Esophagus squamous epithelium (tissue), 5 donors: ENCODE measurements at regions of chr16 and their contacts with region 1.

Region 1: DNA sequence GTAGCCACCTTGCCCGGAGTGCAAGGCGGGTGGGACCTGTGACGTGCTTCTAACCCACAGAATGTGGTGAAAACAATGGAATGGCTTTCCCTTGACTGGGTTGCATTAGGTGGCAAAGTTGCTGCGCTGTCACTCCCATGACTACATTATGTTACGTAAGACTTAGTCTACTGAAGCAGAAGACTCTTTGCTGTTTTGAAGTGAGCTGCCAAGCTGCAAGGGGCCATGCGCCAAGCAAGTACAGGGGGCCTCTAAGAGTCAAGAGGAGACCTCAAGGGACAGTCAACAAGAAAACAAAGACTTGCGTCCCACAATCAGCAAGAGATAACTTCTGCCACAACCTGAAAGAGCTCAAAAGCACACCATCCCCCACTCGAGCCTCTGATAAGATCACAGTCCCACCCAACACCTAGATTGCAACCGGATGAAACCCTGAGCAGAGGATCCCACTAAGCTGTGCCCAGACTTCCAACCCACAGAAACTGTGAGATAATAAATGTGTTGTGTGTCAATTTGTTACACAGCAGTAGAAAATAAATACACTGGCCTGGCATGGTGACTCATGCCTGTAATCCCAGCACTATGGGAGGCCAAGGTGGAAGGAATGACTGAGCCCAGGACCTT is 16.5 kb downstream of the ANKRD11 start:
- DNase-seq: no peak
- H3K4me3 ChIP-seq: no peak overlapping the region
- H3K27ac ChIP-seq: peak overlapping the region in 3 of 4 donors; percentile 53 to 89 (median 85)
- H3K4me1 ChIP-seq: peaks cover 41 to 94% (median 74%) of the 10 kb centered on the region in 3 donors
- H3K27me3 ChIP-seq: no peaks in the 10 kb centered on the region
- CTCF ChIP-seq: no peak
- POLR2A ChIP-seq: no peak

Region 2: DNA sequence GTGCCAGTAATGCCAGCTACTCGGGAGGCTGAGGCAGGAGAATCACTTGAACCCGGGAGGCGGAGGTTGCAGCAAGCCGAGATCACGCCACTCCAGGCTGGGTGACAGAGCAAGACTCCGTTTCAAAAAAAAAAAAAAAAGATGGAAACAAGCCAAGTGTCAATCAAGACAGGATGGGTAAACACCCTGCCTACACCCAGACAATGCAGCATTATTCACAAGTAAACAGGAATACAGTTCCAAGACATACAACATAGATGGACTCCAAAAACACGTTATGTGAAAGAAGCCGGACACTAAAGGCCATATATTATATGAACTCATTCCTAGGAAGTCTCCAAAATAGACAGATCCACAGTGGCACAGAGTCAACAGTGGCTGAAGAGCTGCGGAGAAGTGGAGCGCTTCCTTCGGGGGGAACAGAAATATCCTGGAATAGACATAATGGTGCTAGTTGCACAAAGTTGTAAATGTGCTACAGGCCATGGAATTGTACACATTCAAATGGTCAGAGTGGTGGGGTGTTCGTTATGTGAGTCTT is 17.4 kb before region 1 on chr16:
- intact Hi-C with region 1: loop called (anchors 2 kb)
- DNase-seq: no peak
- H3K4me3 ChIP-seq: no peak overlapping the region
- H3K27ac ChIP-seq: no peak overlapping the region
- H3K4me1 ChIP-seq: peaks cover 17 to 96% (median 52%) of the 10 kb centered on the region in 3 donors
- H3K27me3 ChIP-seq: no peaks in the 10 kb centered on the region
- CTCF ChIP-seq: no peak
- POLR2A ChIP-seq: no peak